GM13977 (cell line): ENCODE measurements at regions of chr6 and their contacts with region 1.

Region 1: GRCh38 chr6:56843573-56844349 is 111.1 kb upstream of the BEND6 start:
- DNase-seq: peak; percentile 84
- CTCF ChIP-seq: peak; percentile 68

Region 2: DNA sequence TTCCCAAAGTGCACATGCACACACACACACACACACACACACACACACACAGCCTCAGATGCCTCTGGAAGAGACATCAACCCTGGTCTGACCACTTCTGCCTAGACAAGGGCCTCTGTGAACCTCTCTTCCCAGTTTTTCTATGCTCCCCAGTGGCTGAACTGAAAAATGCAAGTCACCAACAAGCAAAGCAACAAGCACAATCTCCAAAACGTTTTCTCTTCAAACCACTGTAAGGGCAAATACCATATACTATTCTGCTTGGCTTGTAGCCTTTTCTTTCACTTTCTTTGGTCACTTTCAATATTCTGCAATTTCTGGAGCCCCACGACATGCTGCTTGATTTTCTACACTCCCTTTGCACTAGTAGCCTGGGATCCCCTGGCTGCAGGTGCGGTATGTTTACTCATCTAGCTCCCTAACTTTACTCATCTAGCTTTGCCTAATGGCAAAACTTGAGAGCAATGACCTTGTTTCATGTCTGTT is 79.6 kb before region 1 on chr6:
- in situ Hi-C with region 1: loop called (anchors 10 kb)
- DNase-seq: peak; percentile 34
- CTCF ChIP-seq: peak; percentile 38